ENCODE measurements at regions of chr16 and their contacts with region 1.

Region 1: DNA sequence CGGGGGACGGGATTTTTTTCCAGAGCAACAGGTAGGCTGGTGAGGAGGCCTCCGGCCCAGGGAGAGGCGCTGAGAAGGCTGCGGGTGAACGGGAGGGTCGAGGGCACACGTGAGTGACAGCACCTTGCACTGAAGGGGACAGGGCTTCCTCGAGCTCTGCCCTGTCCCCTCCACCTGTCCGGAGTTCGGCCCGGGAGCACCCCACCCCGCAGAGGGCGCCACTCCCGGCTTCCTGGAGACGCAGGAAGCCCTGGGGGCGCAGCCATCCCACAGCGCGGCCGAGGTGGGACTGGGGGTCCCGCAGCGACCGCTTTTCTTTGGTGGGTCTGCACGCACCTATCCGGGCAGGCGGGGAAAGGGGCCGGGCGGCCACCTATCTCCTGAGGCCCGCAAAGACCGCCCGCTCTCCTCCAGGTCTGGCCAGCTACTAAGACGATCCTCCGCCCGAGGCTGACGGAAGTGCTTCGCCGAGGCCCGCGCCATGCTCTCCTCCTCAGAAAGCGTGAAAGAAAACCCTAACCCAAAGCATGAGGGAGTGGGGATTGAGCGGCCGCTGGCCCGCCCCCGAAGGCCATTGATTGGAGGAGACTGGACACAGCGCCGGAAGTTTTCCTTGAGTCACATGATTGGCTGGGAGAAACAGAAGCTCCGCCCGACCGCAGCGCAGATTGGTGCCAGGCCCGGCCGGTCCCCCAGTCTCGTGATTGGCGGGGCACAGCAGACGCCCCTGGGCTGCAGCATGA is 34.3 kb downstream of the DDX19A start:
- DNase-seq: peak; percentile 90 to 98 (median 96)
- ATAC-seq: peak; percentile 91
- H3K4me3 ChIP-seq: peak overlapping the region; percentile 67 to 84
- H3K4me3 Mint-ChIP-seq: peak overlapping the region; percentile 95
- H3K27ac ChIP-seq: peak overlapping the region; percentile 73 to 79
- H3K27ac Mint-ChIP-seq: peak overlapping the region; percentile 95
- H3K4me1 ChIP-seq: peaks cover 10% of the 10 kb centered on the region
- H3K4me1 Mint-ChIP-seq: peaks cover 21% of the 10 kb centered on the region
- H3K27me3 ChIP-seq: no peaks in the 10 kb centered on the region
- H3K27me3 Mint-ChIP-seq: no peaks in the 10 kb centered on the region
- CTCF ChIP-seq: no peak

Region 2: DNA sequence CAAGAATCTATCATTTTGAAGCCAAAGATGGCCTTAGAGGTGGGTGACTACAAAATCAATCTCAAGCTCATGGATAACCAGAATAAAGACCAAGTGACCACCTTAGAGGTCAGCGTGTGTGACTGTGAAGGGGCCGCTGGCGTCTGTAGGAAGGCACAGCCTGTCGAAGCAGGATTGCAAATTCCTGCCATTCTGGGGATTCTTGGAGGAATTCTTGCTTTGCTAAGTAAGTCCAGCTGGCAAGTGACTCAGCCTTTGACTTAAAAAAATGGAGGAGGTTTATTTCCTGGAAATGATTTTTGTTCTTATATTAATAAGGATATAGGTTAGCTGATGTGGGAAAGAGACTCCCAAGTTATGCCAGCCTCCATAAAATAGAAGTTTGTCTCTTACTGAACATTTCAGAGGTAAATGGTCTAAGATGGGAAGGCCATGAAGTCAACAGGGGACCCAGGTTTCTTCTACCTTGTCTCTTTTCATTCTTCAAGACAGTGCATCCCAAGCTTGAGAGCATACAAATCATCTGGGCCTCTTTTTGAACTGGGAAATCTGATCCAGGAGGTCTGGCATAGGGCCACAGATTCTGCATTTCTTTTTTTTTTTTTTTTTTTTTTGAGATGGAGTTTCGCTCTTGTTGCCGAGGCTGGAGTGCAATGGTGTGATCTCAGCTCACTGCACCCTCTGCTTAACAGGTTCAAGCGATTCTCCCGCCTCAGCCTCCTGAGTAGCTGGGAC is 1557.5 kb before region 1 on chr16:
- CTCF ChIA-PET with region 1: no interaction called
- POLR2A ChIA-PET with region 1: no interaction called
- intact Hi-C with region 1: no loop called
- DNase-seq: no peak
- ATAC-seq: no peak
- H3K4me3 ChIP-seq: no peak overlapping the region
- H3K4me3 Mint-ChIP-seq: no peak overlapping the region
- H3K27ac ChIP-seq: no peak overlapping the region
- H3K27ac Mint-ChIP-seq: no peak overlapping the region
- H3K4me1 ChIP-seq: no peaks in the 10 kb centered on the region
- H3K4me1 Mint-ChIP-seq: no peaks in the 10 kb centered on the region
- H3K27me3 ChIP-seq: no peaks in the 10 kb centered on the region
- H3K27me3 Mint-ChIP-seq: no peaks in the 10 kb centered on the region
- CTCF ChIP-seq: no peak

Region 3: DNA sequence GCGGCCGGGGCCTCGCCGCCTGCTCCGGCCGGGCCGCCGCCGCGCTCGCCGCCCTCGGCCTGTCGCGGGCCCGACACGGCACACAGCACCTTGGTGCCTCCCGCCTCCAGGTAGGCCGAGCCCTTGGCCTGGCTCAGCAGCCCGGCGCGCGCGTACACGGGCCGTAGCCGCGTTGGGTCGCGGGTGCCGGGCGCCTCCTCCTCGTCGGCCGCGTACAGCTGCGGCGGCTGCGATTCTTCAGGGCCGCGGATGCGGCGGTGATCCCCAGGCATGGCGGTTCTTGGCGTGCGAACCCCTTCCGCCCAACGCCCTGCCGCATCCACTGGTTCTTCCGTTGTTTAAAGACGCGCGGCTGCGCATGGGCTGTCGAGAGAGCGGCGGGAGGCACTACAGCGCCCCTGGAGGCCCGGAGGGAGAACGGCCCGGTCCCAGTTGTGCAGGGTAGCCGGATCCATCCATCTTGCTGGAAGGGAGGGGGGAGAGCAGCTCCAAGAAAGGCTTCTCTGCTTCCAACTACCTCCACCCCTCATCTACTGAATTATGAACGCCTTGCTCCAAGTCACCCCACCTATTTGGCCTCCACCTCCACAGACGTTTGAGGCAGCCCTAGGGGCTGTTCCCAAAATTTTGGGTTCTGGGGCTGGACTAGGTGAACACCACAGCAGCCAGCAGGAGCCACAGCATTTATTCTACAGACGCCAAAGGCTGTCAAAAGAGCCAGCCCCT is 129.2 kb before region 1 on chr16 and contains the start of gene EXOSC6:
- CTCF ChIA-PET with region 1: no interaction called
- POLR2A ChIA-PET with region 1: interaction called, 5 read pairs
- intact Hi-C with region 1: loop called in 1 of 2 experiments (anchors 2 kb)
- DNase-seq: peak; percentile 80 to 97 (median 92)
- ATAC-seq: peak; percentile 97
- H3K4me3 ChIP-seq: peak within 1 kb of the TSS; percentile 41 to 62
- H3K4me3 Mint-ChIP-seq: peak within 1 kb of the TSS; percentile 92
- H3K27ac ChIP-seq: peak within 1 kb of the TSS; percentile 60 to 85
- H3K27ac Mint-ChIP-seq: peak within 1 kb of the TSS; percentile 97
- H3K4me1 ChIP-seq: peaks cover 18% of the 10 kb centered on the region
- H3K4me1 Mint-ChIP-seq: peaks cover 26% of the 10 kb centered on the region
- H3K27me3 ChIP-seq: no peaks in the 10 kb centered on the region
- H3K27me3 Mint-ChIP-seq: no peaks in the 10 kb centered on the region
- CTCF ChIP-seq: peak; percentile 80
- total RNA-seq, gene EXOSC6: 40.6 to 43.6 TPM

Region 4: DNA sequence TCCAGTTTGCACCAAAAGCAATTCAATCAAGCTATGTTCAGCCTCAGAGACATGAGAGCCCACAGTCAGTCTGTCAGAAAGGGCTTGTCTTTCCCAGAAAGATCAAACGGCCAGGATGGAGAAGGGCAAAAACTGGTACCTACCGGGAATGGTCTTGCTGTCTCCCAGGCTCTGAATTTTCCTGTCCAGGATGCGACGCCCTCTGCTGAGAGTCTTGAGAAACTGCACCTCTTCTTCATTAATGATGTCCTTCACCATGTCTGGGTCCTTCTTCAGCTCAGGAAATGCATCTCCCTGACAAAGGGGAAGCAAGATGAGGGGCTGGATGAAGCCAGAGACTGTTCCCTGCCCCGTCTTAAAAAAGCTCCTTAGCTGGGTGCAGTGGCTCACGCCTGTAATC is 113.5 kb before region 1 on chr16:
- CTCF ChIA-PET with region 1: no interaction called
- POLR2A ChIA-PET with region 1: no interaction called
- intact Hi-C with region 1: no loop called
- DNase-seq: peak in 3 of 9 experiments; percentile 27 to 60 (median 51)
- ATAC-seq: no peak
- H3K4me3 ChIP-seq: no peak overlapping the region
- H3K4me3 Mint-ChIP-seq: no peak overlapping the region
- H3K27ac ChIP-seq: no peak overlapping the region
- H3K27ac Mint-ChIP-seq: no peak overlapping the region
- H3K4me1 ChIP-seq: no peaks in the 10 kb centered on the region
- H3K4me1 Mint-ChIP-seq: no peaks in the 10 kb centered on the region
- H3K27me3 ChIP-seq: no peaks in the 10 kb centered on the region
- H3K27me3 Mint-ChIP-seq: no peaks in the 10 kb centered on the region
- CTCF ChIP-seq: peak; percentile 42

Region 5: GRCh38 chr16:70348991-70349390 is 32.0 kb before region 1 on chr16:
- CTCF ChIA-PET with region 1: no interaction called
- POLR2A ChIA-PET with region 1: interaction called, 31 read pairs
- intact Hi-C with region 1: loop called (anchors 1 kb)
- DNase-seq: no peak
- ATAC-seq: no peak
- H3K4me3 ChIP-seq: no peak overlapping the region
- H3K4me3 Mint-ChIP-seq: no peak overlapping the region
- H3K27ac ChIP-seq: no peak overlapping the region
- H3K27ac Mint-ChIP-seq: peak overlapping the region; percentile 20
- H3K4me1 ChIP-seq: peaks cover 23% of the 10 kb centered on the region
- H3K4me1 Mint-ChIP-seq: peaks cover 33% of the 10 kb centered on the region
- H3K27me3 ChIP-seq: no peaks in the 10 kb centered on the region
- H3K27me3 Mint-ChIP-seq: no peaks in the 10 kb centered on the region
- CTCF ChIP-seq: no peak

Region 6: GRCh38 chr16:70395345-70395901 is 14.4 kb after region 1 on chr16:
- CTCF ChIA-PET with region 1: interaction called, 5 read pairs
- POLR2A ChIA-PET with region 1: interaction called, 11 read pairs
- intact Hi-C with region 1: no loop called
- DNase-seq: peak; percentile 21 to 76 (median 58)
- ATAC-seq: peak; percentile 70
- H3K4me3 ChIP-seq: no peak overlapping the region
- H3K4me3 Mint-ChIP-seq: no peak overlapping the region
- H3K27ac ChIP-seq: no peak overlapping the region
- H3K27ac Mint-ChIP-seq: no peak overlapping the region
- H3K4me1 ChIP-seq: no peaks in the 10 kb centered on the region
- H3K4me1 Mint-ChIP-seq: peaks cover 5% of the 10 kb centered on the region
- H3K27me3 ChIP-seq: no peaks in the 10 kb centered on the region
- H3K27me3 Mint-ChIP-seq: no peaks in the 10 kb centered on the region
- CTCF ChIP-seq: peak; percentile 48

Region 7: DNA sequence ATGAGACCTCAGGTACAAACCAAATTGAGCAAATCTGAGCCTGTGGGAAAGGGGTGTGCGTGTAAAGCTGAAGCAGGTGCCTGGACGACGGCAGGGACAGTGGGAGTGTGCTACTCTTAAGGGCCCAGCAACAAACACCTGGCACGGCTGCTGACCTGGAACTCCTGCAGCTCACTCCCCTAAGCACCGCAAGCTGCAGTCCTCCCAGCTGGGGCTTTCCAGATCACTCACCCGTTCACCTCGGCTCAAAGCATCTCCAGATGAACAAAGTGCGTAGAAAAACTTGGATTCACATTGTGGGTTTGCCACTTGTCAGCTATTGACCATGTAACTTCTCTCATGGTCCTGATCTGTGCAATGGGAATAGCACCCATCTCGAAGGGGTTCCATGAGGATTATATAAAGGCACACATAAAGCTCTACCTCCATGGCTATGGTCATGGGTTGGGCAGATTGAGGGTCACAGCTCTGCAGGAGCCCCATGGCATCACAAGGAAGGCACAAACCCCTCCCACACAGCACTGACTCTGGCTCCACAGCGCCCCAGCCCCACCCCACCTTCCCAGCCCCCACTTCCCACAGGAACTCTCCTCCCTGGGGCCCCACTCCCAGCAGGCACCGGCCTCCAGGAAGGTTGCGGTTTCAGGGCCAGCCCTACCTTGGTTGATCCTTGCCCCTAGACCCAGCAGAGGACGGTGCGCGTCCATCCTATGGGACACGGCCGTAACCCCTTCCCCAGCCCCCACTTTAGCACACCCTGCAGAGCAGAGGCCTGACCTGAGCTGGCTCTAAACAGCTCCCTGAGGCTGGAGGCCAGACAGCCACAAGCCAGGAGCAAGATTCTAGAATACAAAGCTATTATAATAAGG is 36.0 kb after region 1 on chr16:
- CTCF ChIA-PET with region 1: no interaction called
- POLR2A ChIA-PET with region 1: interaction called, 14 read pairs
- intact Hi-C with region 1: no loop called
- DNase-seq: no peak
- ATAC-seq: no peak
- H3K4me3 ChIP-seq: no peak overlapping the region
- H3K4me3 Mint-ChIP-seq: peak overlapping the region; percentile 49
- H3K27ac ChIP-seq: no peak overlapping the region
- H3K27ac Mint-ChIP-seq: peak overlapping the region; percentile 79
- H3K4me1 ChIP-seq: peaks cover 40% of the 10 kb centered on the region
- H3K4me1 Mint-ChIP-seq: peaks cover 43% of the 10 kb centered on the region
- H3K27me3 ChIP-seq: no peaks in the 10 kb centered on the region
- H3K27me3 Mint-ChIP-seq: no peaks in the 10 kb centered on the region
- CTCF ChIP-seq: no peak

Region 8: DNA sequence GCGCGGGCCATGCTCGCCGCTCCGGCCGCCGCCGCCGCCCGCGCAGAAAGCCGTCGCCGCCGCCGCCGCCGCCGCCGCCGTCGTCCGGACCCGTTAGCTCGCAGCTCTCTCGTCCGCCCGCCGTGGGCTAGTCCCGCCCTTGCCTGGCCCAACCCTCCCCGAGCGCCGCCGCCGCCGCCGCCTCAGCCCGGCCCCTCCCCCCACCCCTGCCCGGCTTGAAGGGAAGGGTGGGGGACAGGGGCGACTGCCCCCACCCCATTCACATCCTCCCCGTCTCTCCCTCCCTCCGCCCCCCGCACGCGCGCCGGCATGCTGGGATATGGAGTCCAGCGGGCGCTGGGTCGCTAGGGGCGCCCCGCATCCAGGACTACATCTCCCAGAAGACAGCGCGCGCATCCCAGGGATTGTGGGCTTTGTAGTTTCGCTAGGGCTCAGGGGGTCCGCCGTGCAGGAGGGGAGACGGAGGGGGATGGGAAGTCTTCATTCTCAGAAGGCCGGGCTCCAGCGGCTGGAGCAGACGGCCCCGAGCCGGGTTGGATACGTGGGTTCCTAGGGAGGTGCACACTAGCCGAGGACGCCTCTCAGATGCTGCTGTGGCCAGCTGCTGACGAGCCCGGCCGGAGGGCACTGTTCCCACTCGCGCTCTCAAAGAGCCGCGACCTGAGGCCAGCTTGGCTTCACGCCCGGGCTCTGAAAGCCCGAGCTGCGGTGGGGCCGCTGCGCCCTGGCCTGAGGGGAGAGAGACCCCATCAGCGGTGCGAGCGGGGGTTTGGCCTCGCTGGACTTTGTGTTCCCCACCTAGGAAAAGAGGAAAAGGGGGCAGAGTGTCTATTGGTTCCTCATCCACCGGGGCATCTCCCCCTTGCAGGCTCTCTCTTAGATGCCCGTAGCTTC is 58.2 kb after region 1 on chr16 and contains the start of gene ST3GAL2:
- CTCF ChIA-PET with region 1: interaction called, 3 read pairs
- POLR2A ChIA-PET with region 1: interaction called, 23 read pairs
- intact Hi-C with region 1: loop called (anchors 1 kb)
- DNase-seq: peak; percentile 87 to 97 (median 94)
- ATAC-seq: peak; percentile 97
- H3K4me3 ChIP-seq: peak within 1 kb of the TSS; percentile 75 to 91
- H3K4me3 Mint-ChIP-seq: peak within 1 kb of the TSS; percentile 94
- H3K27ac ChIP-seq: peak within 1 kb of the TSS; percentile 48 to 65
- H3K27ac Mint-ChIP-seq: peak within 1 kb of the TSS; percentile 89
- H3K4me1 ChIP-seq: peaks cover 36% of the 10 kb centered on the region
- H3K4me1 Mint-ChIP-seq: peaks cover 39% of the 10 kb centered on the region
- H3K27me3 ChIP-seq: no peaks in the 10 kb centered on the region
- H3K27me3 Mint-ChIP-seq: no peaks in the 10 kb centered on the region
- CTCF ChIP-seq: no peak
- total RNA-seq, gene ST3GAL2: 5.6 to 6.1 TPM

Region 9: DNA sequence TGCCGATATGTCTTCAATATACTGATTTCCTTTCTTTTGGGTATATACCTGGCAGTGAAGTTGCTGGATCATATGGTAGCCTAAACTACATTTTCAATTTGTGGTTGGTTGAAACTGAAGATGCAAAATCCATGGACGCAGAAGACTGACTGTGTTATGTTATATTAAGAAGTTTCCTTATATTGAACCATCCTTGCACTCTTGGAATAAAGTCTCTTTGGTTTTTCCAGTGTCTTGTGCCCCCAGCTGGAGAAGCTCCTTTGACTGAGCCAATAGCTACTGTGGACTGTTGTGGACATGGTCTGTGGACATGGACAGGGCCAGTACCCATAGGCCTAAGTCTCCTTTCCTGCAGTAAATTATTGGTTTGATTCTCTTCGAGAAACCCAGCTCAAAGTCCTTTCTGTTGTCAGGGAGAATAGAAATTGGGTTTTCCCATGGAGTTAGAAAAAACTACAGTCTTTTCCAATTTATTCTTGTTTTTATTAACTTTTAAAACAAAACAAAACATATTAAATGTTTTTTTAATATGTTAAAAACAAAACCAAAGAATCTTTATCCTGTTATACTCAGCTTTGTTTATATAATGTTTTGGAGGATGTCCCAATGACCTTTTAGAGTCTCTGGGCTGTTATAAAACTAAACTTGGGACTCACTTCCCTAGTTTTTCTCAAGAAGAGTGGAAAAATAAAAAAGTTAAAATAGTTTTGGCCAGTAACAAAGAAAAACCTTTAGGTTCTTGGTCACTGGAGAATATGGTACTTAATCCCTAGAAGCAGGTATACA is 250.1 kb after region 1 on chr16:
- CTCF ChIA-PET with region 1: no interaction called
- POLR2A ChIA-PET with region 1: no interaction called
- intact Hi-C with region 1: no loop called
- DNase-seq: no peak
- ATAC-seq: no peak
- H3K4me3 ChIP-seq: no peak overlapping the region
- H3K4me3 Mint-ChIP-seq: no peak overlapping the region
- H3K27ac ChIP-seq: no peak overlapping the region
- H3K27ac Mint-ChIP-seq: no peak overlapping the region
- H3K4me1 ChIP-seq: no peaks in the 10 kb centered on the region
- H3K4me1 Mint-ChIP-seq: no peaks in the 10 kb centered on the region
- H3K27me3 ChIP-seq: no peaks in the 10 kb centered on the region
- H3K27me3 Mint-ChIP-seq: no peaks in the 10 kb centered on the region
- CTCF ChIP-seq: no peak

Region 10: GRCh38 chr16:70695331-70696070 is 314.5 kb after region 1 on chr16:
- CTCF ChIA-PET with region 1: no interaction called
- POLR2A ChIA-PET with region 1: no interaction called
- intact Hi-C with region 1: no loop called
- DNase-seq: peak in 7 of 9 experiments; percentile 1 to 72 (median 29)
- ATAC-seq: peak; percentile 10
- H3K4me3 ChIP-seq: no peak overlapping the region
- H3K4me3 Mint-ChIP-seq: peak overlapping the region; percentile 44
- H3K27ac ChIP-seq: no peak overlapping the region
- H3K27ac Mint-ChIP-seq: peak overlapping the region; percentile 91
- H3K4me1 ChIP-seq: peaks cover 38% of the 10 kb centered on the region
- H3K4me1 Mint-ChIP-seq: peaks cover 31% of the 10 kb centered on the region
- H3K27me3 ChIP-seq: no peaks in the 10 kb centered on the region
- H3K27me3 Mint-ChIP-seq: no peaks in the 10 kb centered on the region
- CTCF ChIP-seq: no peak